Activated CD4-positive, alpha-beta memory T cell treated with anti-CD3 and anti-CD28 coated beads, Interleukin-2, amount 10 ng/mL, durations not matched to agents 7 days and 5 days (primary cell): ENCODE measurements at regions of chr9 and their contacts with region 1.

Region 1: DNA sequence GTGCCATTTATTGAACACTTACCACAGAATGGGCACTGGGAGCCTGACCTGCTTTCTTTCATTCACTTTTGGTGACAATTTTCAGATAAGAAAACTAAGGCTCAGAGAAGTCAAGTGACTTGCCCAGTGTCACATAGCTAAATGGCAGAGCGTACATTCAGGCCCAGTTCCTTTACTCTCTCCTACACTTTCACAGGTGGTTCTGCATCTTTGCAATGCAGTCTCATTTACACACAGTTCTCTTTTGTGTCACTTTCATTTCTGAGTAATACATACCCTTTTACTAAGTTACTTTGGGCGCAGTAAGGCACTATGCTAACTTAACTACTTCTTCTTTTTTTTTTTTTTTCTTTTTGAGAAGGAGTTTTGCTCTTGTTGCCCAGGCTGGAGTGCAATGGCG is 8.3 kb downstream of the NFIL3 start:
- DNase-seq: no peak
- H3K4me3 Mint-ChIP-seq: peak overlapping the region; percentile 22
- H3K27ac Mint-ChIP-seq: peak overlapping the region; percentile 4
- H3K4me1 Mint-ChIP-seq: peaks cover 87% of the 10 kb centered on the region
- H3K27me3 Mint-ChIP-seq: no peaks in the 10 kb centered on the region

Region 2: GRCh38 chr9:91378695-91379127 is 36.6 kb before region 1 on chr9:
- CTCF ChIA-PET with region 1: no interaction called
- POLR2A ChIA-PET with region 1: no interaction called
- DNase-seq: no peak
- H3K4me3 Mint-ChIP-seq: no peak overlapping the region
- H3K27ac Mint-ChIP-seq: no peak overlapping the region
- H3K4me1 Mint-ChIP-seq: peaks cover 12% of the 10 kb centered on the region
- H3K27me3 Mint-ChIP-seq: peaks cover 24% of the 10 kb centered on the region

Region 3: GRCh38 chr9:91395553-91396471 is 19.5 kb before region 1 on chr9:
- CTCF ChIA-PET with region 1: interaction called, 4 read pairs
- POLR2A ChIA-PET with region 1: interaction called, 13 read pairs
- DNase-seq: peak; percentile 29
- H3K4me3 Mint-ChIP-seq: peak overlapping the region; percentile 41
- H3K27ac Mint-ChIP-seq: peak overlapping the region; percentile 77
- H3K4me1 Mint-ChIP-seq: peaks cover 26% of the 10 kb centered on the region
- H3K27me3 Mint-ChIP-seq: no peaks in the 10 kb centered on the region